MCF 10A (cell line): ENCODE measurements at regions of chr17 and their contacts with region 1.

Region 1: GRCh38 chr17:64506576-64507477 is at the start of gene CEP95:
- DNase-seq: peak; percentile 96
- H3K4me3 Mint-ChIP-seq: peak within 1 kb of the TSS; percentile 99
- H3K27ac Mint-ChIP-seq: peak within 1 kb of the TSS; percentile 100
- H3K4me1 Mint-ChIP-seq: peaks cover 33% of the 10 kb centered on the region
- H3K27me3 Mint-ChIP-seq: no peaks in the 10 kb centered on the region
- CTCF ChIP-seq: no peak
- total RNA-seq, gene CEP95: 57.2 and 61.6 TPM in 2 replicates

Region 2: DNA sequence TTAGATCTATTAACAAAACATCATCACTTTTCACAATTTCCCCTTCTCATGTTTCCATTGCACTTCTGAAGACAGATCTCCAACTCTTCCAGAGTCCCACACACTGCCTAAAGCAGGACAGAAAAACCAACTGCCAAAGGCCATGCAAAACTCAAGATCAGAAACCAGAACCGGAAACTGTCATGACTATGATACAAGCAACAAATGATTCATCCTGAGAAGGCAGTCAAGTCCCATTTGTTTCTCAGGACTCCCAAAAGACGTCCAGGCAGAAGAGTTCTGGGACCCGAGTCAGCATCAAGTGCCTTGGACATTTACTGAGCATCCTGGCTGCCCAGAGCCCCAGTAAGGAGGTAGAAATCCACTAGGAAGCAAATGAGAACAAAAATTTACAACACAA is 415.7 kb before region 1 on chr17:
- CTCF ChIA-PET with region 1: no interaction called
- POLR2A ChIA-PET with region 1: no interaction called
- intact Hi-C with region 1: no loop called
- DNase-seq: no peak
- H3K4me3 Mint-ChIP-seq: no peak overlapping the region
- H3K27ac Mint-ChIP-seq: peak overlapping the region; percentile 85
- H3K4me1 Mint-ChIP-seq: peaks cover 26% of the 10 kb centered on the region
- H3K27me3 Mint-ChIP-seq: no peaks in the 10 kb centered on the region
- CTCF ChIP-seq: no peak

Region 3: DNA sequence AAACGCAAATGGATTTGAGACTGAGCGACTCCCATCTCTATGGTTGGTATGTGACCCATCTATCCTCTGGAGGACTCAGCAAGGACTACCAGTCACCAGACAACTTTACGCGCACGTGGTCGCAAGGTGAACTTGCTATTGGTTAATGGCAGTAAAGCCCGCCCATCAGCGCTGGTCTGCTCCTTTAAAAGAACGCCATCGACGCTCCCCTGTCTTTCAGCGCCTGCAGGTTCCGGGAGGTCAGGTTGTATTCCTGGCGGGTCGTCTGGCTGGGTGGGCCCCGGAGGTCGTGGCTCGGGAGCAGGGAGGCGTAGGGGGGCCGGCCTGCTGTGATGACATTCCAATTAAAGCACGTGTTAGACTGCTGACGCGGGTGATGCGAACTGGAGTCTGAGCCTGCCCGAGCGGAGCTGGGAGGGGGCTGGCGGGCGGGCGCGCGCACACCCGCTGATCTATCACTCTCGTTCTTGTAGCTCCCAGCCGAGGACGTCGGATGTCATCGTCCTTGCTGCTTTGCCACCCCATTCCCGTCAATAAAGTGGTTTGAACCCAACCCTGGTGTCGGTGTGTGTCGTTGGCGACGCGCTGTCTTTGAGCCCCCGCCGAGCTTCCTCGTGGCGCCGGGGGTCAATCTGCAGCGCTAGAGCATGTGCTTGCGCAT is 360.9 kb before region 1 on chr17:
- CTCF ChIA-PET with region 1: no interaction called
- POLR2A ChIA-PET with region 1: interaction called, 35 read pairs
- intact Hi-C with region 1: no loop called
- DNase-seq: peak; percentile 99
- H3K4me3 Mint-ChIP-seq: no peak overlapping the region
- H3K27ac Mint-ChIP-seq: no peak overlapping the region
- H3K4me1 Mint-ChIP-seq: peaks cover 23% of the 10 kb centered on the region
- H3K27me3 Mint-ChIP-seq: no peaks in the 10 kb centered on the region
- CTCF ChIP-seq: no peak

Region 4: DNA sequence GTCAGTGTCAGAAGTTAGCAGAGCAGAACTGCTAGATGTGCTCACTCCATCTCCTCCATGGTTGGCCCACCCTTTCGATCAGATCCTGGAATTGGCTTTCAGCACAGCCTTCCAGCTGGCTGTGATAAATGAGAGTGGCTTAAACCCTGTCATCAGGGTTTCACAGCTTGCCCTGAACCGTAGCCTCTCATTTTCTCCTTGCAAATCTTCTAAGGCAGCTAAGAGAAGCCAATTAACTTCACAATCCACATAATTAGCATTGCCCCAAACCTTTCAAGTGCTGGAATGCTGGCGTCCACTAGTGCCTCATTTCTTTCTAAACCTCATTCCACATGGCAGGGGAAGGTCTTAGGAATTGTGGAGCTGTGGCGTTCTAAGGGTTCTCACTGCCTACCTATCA is 36.2 kb before region 1 on chr17:
- CTCF ChIA-PET with region 1: no interaction called
- POLR2A ChIA-PET with region 1: no interaction called
- intact Hi-C with region 1: no loop called
- DNase-seq: no peak
- H3K4me3 Mint-ChIP-seq: no peak overlapping the region
- H3K27ac Mint-ChIP-seq: no peak overlapping the region
- H3K4me1 Mint-ChIP-seq: no peaks in the 10 kb centered on the region
- H3K27me3 Mint-ChIP-seq: no peaks in the 10 kb centered on the region
- CTCF ChIP-seq: no peak

Region 5: GRCh38 chr17:64491034-64491859 is 15.6 kb before region 1 on chr17:
- CTCF ChIA-PET with region 1: interaction called, 8 read pairs
- POLR2A ChIA-PET with region 1: interaction called, 225 read pairs
- intact Hi-C with region 1: no loop called
- DNase-seq: peak; percentile 63
- H3K4me3 Mint-ChIP-seq: no peak overlapping the region
- H3K27ac Mint-ChIP-seq: no peak overlapping the region
- H3K4me1 Mint-ChIP-seq: peaks cover 13% of the 10 kb centered on the region
- H3K27me3 Mint-ChIP-seq: no peaks in the 10 kb centered on the region
- CTCF ChIP-seq: peak; percentile 40

Region 6: GRCh38 chr17:64599187-64599676 is 92.4 kb after region 1 on chr17:
- CTCF ChIA-PET with region 1: interaction called, 3 read pairs
- POLR2A ChIA-PET with region 1: interaction called, 17 read pairs
- intact Hi-C with region 1: no loop called
- DNase-seq: no peak
- H3K4me3 Mint-ChIP-seq: no peak overlapping the region
- H3K27ac Mint-ChIP-seq: peak overlapping the region; percentile 16
- H3K4me1 Mint-ChIP-seq: peaks cover 6% of the 10 kb centered on the region
- H3K27me3 Mint-ChIP-seq: no peaks in the 10 kb centered on the region
- CTCF ChIP-seq: no peak

Region 7: GRCh38 chr17:64648234-64648633 is 141.4 kb after region 1 on chr17:
- CTCF ChIA-PET with region 1: interaction called, 6 read pairs
- POLR2A ChIA-PET with region 1: interaction called, 143 read pairs
- intact Hi-C with region 1: loop called (anchors 2 kb)
- DNase-seq: no peak
- H3K4me3 Mint-ChIP-seq: no peak overlapping the region
- H3K27ac Mint-ChIP-seq: peak overlapping the region; percentile 53
- H3K4me1 Mint-ChIP-seq: peaks cover 29% of the 10 kb centered on the region
- H3K27me3 Mint-ChIP-seq: no peaks in the 10 kb centered on the region
- CTCF ChIP-seq: no peak